Heart left ventricle (tissue), 16 donors: ENCODE measurements at regions of chr9 and their contacts with region 1.

Region 1: DNA sequence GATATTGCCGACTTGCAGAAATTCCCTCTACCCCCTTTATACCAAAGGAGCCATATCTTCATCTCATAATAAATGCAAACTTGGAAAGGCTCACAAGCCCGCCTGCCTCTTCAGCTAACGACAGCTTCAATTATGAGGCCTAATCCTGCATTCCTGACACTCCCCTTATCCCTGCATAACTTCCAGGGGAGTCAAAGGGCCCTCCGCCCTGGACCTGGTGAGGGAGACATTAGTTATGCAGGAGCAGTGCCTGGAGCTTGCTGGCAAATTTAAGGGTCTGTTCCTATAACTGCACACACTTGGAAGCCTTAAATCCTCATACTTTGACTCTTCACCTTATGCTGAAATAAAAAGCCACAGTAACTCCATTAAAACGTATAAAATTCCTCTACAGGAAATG is 617.9 kb downstream of the BNC2 start:
- DNase-seq: no peak
- ATAC-seq: no peak
- H3K4me3 ChIP-seq: no peak overlapping the region
- H3K27ac ChIP-seq: no peak overlapping the region
- H3K4me1 ChIP-seq: peaks cover 0 to 3% (median 0%) of the 10 kb centered on the region in 12 donors
- H3K27me3 ChIP-seq: no peaks in the 10 kb centered on the region
- CTCF ChIP-seq: no peak
- POLR2A ChIP-seq: no peak

Region 2: GRCh38 chr9:16289639-16290038 is 37.0 kb after region 1 on chr9:
- intact Hi-C with region 1: no loop called
- DNase-seq: peak in 1 of 5 donors; percentile 39
- ATAC-seq: peak; percentile 41 to 80 (median 56)
- H3K4me3 ChIP-seq: no peak overlapping the region
- H3K27ac ChIP-seq: no peak overlapping the region
- H3K4me1 ChIP-seq: peaks cover 0 to 10% (median 0%) of the 10 kb centered on the region in 12 donors
- H3K27me3 ChIP-seq: peaks cover 0 to 7% (median 0%) of the 10 kb centered on the region in 9 donors
- CTCF ChIP-seq: no peak
- POLR2A ChIP-seq: no peak

Region 3: GRCh38 chr9:16304301-16304700 is 51.7 kb after region 1 on chr9:
- intact Hi-C with region 1: loop called in 1 of 10 experiments (anchors 5 kb)
- DNase-seq: no peak
- ATAC-seq: no peak
- H3K4me3 ChIP-seq: no peak overlapping the region
- H3K27ac ChIP-seq: no peak overlapping the region
- H3K4me1 ChIP-seq: no peaks in the 10 kb centered on the region
- H3K27me3 ChIP-seq: no peaks in the 10 kb centered on the region
- CTCF ChIP-seq: no peak
- POLR2A ChIP-seq: no peak